Activated B cell treated with CpG ODN at 0.5 μM for 24 hours (primary cell): ENCODE measurements at regions of chr2 and their contacts with region 1.

Region 1: GRCh38 chr2:73176881-73177644 is 25.3 kb upstream of the NOTO start:
- DNase-seq: peak; percentile 87
- ATAC-seq: peak; percentile 92
- H3K4me3 Mint-ChIP-seq: peak overlapping the region; percentile 94
- H3K27ac Mint-ChIP-seq: peak overlapping the region; percentile 46
- H3K4me1 Mint-ChIP-seq: peaks cover 15% of the 10 kb centered on the region
- H3K27me3 Mint-ChIP-seq: peaks cover 43% of the 10 kb centered on the region
- CTCF ChIP-seq: peak; percentile 69

Region 2: DNA sequence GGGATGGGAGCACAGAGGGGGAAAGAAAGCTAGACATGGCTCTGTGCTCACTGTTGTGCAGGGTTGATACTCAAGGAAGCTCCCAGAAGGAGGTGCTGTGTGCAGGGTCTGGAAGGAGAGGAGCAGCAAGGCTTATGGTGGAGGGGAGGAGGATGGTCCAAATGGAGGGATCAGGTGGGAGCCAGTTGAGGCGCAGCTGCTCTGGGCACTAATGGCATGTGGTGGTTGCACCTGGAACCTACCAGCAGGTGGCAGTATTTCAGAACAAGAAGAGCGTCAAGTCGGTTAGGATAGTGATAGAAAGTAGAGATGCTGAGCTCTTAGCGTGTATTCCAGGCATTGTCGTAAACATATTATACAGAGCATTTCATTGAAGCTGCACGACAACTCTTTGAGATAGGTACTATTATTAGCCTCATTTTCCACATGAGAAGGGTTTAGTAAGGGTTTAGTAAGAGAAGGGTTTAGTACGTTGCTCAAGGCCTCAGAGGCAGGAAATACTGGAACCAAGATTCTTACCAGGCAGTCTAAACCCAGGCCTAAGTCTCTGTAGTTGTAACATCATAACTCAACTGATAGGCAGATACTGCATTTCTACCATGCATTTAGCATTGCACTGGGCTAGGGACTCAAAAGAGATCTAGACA is 1253.1 kb before region 1 on chr2:
- CTCF ChIA-PET with region 1: no interaction called
- POLR2A ChIA-PET with region 1: no interaction called
- intact Hi-C with region 1: loop called (anchors 5 kb)
- DNase-seq: no peak
- ATAC-seq: peak; percentile 37
- H3K4me3 Mint-ChIP-seq: no peak overlapping the region
- H3K27ac Mint-ChIP-seq: no peak overlapping the region
- H3K4me1 Mint-ChIP-seq: no peaks in the 10 kb centered on the region
- H3K27me3 Mint-ChIP-seq: no peaks in the 10 kb centered on the region
- CTCF ChIP-seq: no peak

Region 3: GRCh38 chr2:72862239-72862988 is 314.6 kb before region 1 on chr2:
- CTCF ChIA-PET with region 1: interaction called, 3 read pairs
- POLR2A ChIA-PET with region 1: no interaction called
- intact Hi-C with region 1: loop called (anchors 1 kb)
- DNase-seq: peak; percentile 77
- ATAC-seq: peak; percentile 89
- H3K4me3 Mint-ChIP-seq: peak overlapping the region; percentile 42
- H3K27ac Mint-ChIP-seq: no peak overlapping the region
- H3K4me1 Mint-ChIP-seq: peaks cover 16% of the 10 kb centered on the region
- H3K27me3 Mint-ChIP-seq: peaks cover 39% of the 10 kb centered on the region
- CTCF ChIP-seq: peak; percentile 87

Region 4: DNA sequence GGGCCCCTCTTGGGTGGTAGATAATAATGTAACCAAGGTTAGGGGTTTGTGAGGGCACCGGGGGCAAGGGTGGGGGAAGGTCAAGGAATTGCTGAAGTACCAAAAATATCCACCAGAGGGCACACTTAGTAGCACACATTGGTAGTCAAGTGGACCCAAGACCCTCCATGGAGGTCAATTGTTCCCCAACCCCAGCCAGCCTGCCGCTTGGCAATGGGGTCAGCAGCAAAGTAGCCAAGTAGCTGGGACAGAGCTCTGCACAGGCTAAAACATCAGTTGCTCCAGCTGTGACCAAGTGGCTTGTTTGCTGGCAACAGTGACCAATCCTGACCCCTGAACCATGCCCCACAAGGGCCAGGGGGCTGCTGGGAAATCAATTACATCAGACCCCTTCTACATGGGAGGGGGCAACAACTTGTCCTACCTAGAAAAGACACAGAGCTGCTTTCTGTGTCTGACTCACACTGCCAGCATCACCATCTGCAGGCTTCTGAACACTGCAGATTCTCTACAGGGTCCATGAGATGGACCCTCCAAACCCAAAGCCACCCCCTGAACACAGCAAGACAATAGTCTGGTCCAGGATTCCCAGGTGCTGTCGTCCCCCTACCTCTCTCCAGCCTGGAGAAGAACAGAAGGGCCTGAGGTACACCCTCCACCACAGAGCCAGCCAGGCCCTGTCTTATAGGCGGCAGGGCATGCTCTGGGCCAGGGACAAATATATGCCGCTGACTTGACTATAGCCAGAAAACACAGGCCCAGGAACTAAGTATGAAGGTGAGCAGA is 183.7 kb before region 1 on chr2:
- CTCF ChIA-PET with region 1: interaction called, 67 read pairs
- POLR2A ChIA-PET with region 1: interaction called, 4 read pairs
- intact Hi-C with region 1: loop called (anchors 1 kb)
- DNase-seq: peak; percentile 27
- ATAC-seq: peak; percentile 71
- H3K4me3 Mint-ChIP-seq: no peak overlapping the region
- H3K27ac Mint-ChIP-seq: no peak overlapping the region
- H3K4me1 Mint-ChIP-seq: no peaks in the 10 kb centered on the region
- H3K27me3 Mint-ChIP-seq: no peaks in the 10 kb centered on the region
- CTCF ChIP-seq: peak; percentile 81

Region 5: DNA sequence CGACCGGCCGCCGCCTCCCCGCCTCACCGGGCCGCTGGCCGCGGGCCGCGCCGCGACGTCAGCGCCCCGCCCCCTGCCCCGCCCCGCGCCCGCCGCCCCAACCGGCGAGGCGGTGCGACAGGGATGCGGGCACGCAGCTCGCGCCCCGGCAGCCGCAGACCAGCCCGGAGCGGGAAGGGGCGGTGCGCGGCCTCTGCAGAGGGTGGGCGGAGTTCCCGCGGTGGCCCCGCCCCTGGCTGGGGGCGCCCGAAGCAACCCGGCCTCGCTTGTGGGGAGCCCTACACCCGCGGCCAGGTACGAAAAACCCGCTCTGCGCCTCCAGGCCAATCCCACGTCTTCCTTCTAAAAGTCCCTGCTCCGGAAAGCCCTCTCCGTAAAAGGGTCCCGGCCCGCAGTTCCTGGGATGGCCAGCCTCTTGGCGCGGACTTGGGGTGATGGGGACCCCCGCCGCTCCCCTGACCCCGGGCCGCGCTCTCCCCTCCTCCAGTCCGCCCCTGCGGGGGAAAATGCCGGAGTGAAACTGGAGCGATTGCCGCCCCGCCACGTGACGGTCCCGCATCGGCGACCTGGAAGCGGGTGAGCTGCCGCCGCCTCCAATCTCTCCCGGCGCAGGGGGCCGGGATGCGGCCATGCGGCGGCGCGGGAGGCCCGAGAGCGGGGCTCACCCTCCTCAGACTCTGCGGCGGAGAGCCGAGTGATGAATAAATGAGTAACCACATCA is 64.0 kb before region 1 on chr2 and contains the start of gene RAB11FIP5:
- CTCF ChIA-PET with region 1: interaction called, 6 read pairs
- POLR2A ChIA-PET with region 1: no interaction called
- intact Hi-C with region 1: loop called (anchors 2 kb)
- DNase-seq: peak; percentile 75
- ATAC-seq: peak; percentile 91
- H3K4me3 Mint-ChIP-seq: peak within 1 kb of the TSS; percentile 77
- H3K27ac Mint-ChIP-seq: peak within 1 kb of the TSS; percentile 59
- H3K4me1 Mint-ChIP-seq: peaks cover 11% of the 10 kb centered on the region
- H3K27me3 Mint-ChIP-seq: no peaks in the 10 kb centered on the region
- CTCF ChIP-seq: no peak
- total RNA-seq, gene RAB11FIP5: 3.2 and 3.5 TPM in 2 replicates

Region 6: DNA sequence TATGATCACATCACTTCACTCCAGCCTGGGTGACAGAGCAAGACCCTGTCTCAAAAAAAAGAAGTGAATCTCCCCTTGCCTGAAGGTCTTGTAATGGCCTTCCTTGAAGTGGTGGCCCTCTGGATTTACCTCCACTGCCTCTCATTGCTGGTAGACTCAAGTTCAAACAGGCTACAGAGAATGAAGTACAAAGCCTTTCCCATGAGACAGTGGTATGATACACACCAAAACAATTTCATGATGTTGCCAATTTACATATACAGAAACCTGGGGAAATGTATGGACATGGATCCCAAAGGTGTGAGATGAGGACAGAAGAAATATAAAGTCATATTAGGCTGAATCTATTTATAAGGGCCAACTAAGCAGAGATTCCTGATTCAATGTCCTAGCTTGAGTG is 20.5 kb after region 1 on chr2:
- CTCF ChIA-PET with region 1: no interaction called
- POLR2A ChIA-PET with region 1: no interaction called
- intact Hi-C with region 1: no loop called
- DNase-seq: no peak
- ATAC-seq: no peak
- H3K4me3 Mint-ChIP-seq: no peak overlapping the region
- H3K27ac Mint-ChIP-seq: no peak overlapping the region
- H3K4me1 Mint-ChIP-seq: peaks cover 6% of the 10 kb centered on the region
- H3K27me3 Mint-ChIP-seq: peaks cover 44% of the 10 kb centered on the region
- CTCF ChIP-seq: no peak

Region 7: GRCh38 chr2:73212448-73213176 is 35.5 kb after region 1 on chr2:
- CTCF ChIA-PET with region 1: interaction called, 32 read pairs
- POLR2A ChIA-PET with region 1: interaction called, 6 read pairs
- intact Hi-C with region 1: loop called (anchors 1 kb)
- DNase-seq: peak; percentile 64
- ATAC-seq: peak; percentile 60
- H3K4me3 Mint-ChIP-seq: peak overlapping the region; percentile 49
- H3K27ac Mint-ChIP-seq: no peak overlapping the region
- H3K4me1 Mint-ChIP-seq: peaks cover 32% of the 10 kb centered on the region
- H3K27me3 Mint-ChIP-seq: peaks cover 14% of the 10 kb centered on the region
- CTCF ChIP-seq: no peak

Region 8: DNA sequence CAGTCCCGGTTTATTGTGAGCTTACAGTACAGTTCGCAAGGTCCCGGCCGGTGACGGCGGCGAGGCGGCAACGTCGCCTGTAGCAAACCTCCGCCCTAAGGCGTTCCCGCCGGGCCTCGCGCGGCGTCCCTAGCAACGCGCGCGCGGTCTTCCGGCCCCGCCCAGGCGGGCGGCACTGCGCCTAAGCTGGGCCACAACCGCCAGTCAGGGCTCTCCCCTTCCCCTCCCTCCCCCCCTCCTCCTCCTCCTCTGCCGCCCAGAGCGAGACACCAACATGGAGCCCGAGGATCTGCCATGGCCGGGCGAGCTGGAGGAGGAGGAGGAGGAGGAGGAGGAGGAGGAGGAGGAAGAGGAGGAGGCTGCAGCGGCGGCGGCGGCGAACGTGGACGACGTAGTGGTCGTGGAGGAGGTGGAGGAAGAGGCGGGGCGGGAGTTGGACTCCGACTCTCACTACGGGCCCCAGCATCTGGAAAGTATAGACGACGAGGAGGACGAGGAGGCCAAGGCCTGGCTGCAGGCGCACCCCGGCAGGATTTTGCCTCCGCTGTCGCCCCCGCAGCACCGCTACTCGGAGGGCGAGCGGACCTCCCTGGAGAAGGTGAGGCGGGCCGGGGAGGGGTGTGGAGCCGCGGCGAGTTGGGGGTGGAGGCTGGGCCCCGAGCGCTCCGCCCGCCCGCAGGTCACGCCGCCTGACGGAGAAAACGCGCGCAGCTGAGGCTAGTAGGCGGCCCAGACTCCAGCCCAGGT is 208.7 kb after region 1 on chr2 and contains the start of gene ALMS1:
- CTCF ChIA-PET with region 1: no interaction called
- POLR2A ChIA-PET with region 1: no interaction called
- intact Hi-C with region 1: no loop called
- DNase-seq: peak; percentile 85
- ATAC-seq: peak; percentile 85
- H3K4me3 Mint-ChIP-seq: peak within 1 kb of the TSS; percentile 90
- H3K27ac Mint-ChIP-seq: peak within 1 kb of the TSS; percentile 89
- H3K4me1 Mint-ChIP-seq: peaks cover 19% of the 10 kb centered on the region
- H3K27me3 Mint-ChIP-seq: peaks cover 3% of the 10 kb centered on the region
- CTCF ChIP-seq: no peak
- total RNA-seq, gene ALMS1: 17.8 and 20.1 TPM in 2 replicates